Psoas muscle (tissue), 8 donors: ENCODE measurements at regions of chr7 and their contacts with region 1.

Region 1: GRCh38 chr7:79176859-79177477 is 276.5 kb downstream of the MAGI2 start:
- DNase-seq: no peak
- ATAC-seq: peak in 2 of 4 donors; percentile 65 to 79
- H3K4me3 ChIP-seq: no peak overlapping the region
- H3K27ac ChIP-seq: no peak overlapping the region
- H3K4me1 ChIP-seq: no peaks in the 10 kb centered on the region
- H3K27me3 ChIP-seq: no peaks in the 10 kb centered on the region
- CTCF ChIP-seq: peak; percentile 60

Region 2: GRCh38 chr7:78020136-78020873 is 1156.7 kb before region 1 on chr7:
- intact Hi-C with region 1: loop called in 1 of 2 experiments (anchors 5 kb)
- DNase-seq: peak; percentile 23 to 57
- ATAC-seq: peak; percentile 80 to 88 (median 81)
- H3K4me3 ChIP-seq: peak overlapping the region; percentile 71
- H3K27ac ChIP-seq: peak overlapping the region; percentile 94
- H3K4me1 ChIP-seq: peaks cover 20% of the 10 kb centered on the region
- H3K27me3 ChIP-seq: no peaks in the 10 kb centered on the region
- CTCF ChIP-seq: peak; percentile 77

Region 3: DNA sequence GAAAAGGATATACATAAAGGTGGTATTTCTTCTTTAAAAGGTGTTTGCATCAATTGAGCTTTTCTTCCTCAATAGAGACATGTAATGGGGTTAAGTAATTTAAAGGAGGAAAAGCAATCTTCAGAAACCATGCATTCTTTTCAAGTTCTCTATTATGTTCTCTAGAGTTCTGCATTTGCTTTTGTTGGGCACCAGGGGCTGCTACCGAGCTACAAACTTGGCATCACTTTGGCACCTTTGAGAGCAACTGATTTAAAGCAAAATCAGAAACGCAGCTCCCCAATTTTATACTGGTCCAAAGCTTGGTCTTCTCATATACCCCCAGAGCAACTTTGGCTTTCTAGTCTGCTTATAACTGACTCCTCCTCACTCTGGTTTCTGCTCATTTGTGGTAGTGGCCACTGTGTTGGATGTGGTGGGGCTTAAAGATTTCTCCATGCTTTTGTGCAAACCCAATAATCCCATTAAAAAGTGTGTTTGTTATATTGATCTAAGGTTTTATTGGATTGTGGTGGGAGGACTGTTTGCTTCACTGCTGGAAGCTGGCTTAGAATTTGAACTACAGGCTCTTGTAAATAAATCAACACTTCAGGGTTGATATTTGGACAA is 666.3 kb before region 1 on chr7:
- intact Hi-C with region 1: loop called (anchors 5 kb)
- DNase-seq: no peak
- ATAC-seq: peak in 3 of 4 donors; percentile 37 to 79 (median 53)
- H3K4me3 ChIP-seq: no peak overlapping the region
- H3K27ac ChIP-seq: no peak overlapping the region
- H3K4me1 ChIP-seq: no peaks in the 10 kb centered on the region
- H3K27me3 ChIP-seq: no peaks in the 10 kb centered on the region
- CTCF ChIP-seq: peak; percentile 66

Region 4: DNA sequence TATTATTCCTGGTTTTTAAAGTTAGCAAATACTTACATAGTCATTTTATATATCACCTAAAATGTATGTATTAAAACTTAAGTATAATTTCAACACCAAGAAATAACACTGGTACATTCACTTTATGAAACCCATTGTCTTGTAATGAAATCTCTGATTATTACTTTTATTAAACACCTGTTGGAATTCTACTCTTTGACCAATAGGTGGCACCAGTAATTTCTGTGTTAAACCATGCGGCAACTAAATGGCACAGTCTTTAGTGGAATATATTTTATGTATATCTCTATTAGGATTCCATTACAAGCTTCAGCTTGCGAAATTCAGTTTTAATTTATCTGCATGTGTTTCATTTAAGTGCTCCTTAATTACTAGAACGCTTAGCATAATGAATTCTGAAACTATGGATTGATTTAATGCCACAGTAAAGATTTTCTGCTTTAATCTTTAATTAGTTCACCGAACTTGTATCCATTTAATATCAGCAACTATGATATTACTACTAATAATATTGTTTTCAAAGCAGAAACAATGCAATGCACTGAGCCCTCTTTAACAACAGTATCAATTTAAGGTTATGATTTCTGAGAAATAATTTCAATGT is 95.2 kb after region 1 on chr7:
- intact Hi-C with region 1: no loop called
- DNase-seq: no peak
- ATAC-seq: no peak
- H3K4me3 ChIP-seq: no peak overlapping the region
- H3K27ac ChIP-seq: no peak overlapping the region
- H3K4me1 ChIP-seq: no peaks in the 10 kb centered on the region
- H3K27me3 ChIP-seq: no peaks in the 10 kb centered on the region
- CTCF ChIP-seq: peak; percentile 60